GM13976 (cell line): ENCODE measurements at regions of chr6 and their contacts with region 1.

Region 1: DNA sequence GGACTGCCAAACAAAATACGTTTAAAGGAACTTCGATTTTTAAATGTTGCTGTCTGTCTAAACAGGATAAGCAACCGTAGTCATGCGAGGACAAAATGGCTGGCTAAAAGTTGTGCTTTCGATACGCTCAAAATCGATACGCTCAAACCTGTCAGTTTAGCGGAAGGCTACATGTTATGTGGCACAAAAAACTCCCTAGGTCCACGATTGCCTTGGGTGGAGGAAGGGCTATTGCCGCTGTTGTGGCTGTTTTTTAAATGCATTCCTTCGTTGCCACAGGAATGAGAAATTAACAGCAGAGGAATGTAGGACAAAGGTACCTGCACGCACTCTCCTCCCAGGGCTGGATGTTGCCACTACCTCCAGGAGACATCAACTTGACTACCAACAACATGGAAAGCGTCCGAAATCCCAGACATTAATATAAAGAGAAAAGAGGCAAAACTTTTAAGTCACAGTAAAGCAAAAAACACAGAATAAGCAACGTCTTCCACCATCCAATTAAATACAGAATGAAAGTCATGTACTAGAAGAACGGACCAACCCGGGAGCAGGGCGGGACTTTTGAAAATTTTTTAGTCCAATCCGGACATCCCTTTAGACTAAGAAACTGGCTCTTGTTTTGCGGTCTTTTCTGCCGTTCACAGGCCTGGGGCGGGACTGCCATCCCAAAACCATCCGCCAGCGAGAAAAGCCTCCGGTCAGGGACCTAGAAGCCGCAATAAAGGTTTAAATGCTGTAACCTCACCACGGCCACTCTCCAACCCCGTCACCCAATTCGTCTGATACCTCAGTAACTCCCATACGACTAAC is 32.2 kb upstream of the HFE start:
- DNase-seq: peak; percentile 78
- CTCF ChIP-seq: no peak

Region 2: DNA sequence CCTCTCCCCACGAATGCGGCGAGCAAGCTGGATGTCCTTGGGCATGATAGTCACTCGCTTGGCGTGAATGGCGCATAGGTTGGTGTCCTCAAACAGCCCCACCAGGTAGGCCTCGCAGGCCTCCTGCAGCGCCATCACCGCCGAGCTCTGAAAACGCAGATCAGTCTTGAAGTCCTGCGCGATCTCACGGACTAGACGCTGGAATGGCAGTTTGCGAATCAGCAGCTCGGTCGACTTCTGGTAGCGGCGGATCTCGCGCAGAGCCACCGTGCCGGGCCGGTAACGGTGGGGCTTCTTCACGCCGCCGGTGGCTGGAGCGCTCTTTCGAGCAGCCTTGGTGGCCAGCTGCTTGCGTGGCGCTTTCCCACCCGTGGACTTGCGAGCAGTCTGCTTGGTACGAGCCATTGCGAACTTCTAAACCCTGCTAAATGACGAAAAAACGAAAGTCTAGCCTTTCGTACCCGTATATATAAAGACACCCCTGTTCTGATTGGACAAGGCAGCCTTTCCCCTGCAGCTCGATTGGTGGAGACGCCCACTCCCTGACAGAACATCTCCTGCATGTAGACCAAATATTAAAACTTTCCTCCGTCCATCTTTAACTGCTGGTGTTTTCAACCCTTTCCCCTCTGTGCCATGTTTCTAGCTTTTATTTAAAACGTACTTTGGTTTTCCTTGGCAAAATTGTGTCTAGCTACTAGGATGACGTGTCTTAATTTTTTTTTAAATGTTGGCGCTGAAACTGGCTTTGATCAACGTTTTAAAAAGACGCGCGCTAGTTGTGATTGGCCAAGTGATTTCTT is 142.0 kb after region 1 on chr6:
- in situ Hi-C with region 1: loop called (anchors 10 kb)
- DNase-seq: peak; percentile 87
- CTCF ChIP-seq: no peak